PC-3 (cell line): ENCODE measurements at regions of chr12 and their contacts with region 1.

Region 1: DNA sequence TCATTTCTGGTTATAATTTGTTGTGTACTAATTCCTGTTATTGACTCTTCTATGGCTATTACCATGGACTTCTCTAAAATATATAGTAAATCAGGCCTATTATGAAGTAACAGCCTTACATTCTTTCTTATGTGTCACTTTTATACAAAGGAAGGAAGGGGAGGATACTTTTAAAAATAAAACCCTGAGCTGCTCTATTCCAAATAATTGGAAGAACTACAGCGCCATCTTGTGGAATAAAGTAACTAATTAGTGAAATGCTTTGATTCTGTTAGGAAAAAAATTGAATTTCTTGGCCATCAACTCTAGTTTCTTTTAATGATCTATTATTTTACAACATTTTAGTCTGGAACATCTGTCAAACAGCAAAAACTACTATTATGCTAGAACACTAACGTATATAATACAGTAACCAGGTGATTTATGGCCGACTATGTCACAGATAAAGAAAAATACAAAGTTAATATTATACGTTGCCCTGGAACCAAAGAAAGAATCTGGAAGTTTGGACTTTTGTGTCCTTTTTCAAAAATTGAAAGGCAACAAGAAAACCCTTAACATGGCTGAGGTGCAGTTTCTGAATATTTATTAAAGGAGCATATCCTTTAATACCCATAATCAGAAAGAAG is 55.0 kb upstream of the NELL2 start:
- DNase-seq: peak; percentile 86
- ATAC-seq: peak; percentile 76
- H3K4me3 ChIP-seq: no peak overlapping the region
- H3K27ac ChIP-seq: no peak overlapping the region
- H3K4me1 ChIP-seq: no peaks in the 10 kb centered on the region
- H3K27me3 ChIP-seq: peaks cover 9% of the 10 kb centered on the region; the same call in 1 of the 2 replicates
- CTCF ChIP-seq: peak; percentile 80

Region 2: GRCh38 chr12:43501703-43502102 is 1429.4 kb before region 1 on chr12:
- CTCF ChIA-PET with region 1: no interaction called
- POLR2A ChIA-PET with region 1: no interaction called
- intact Hi-C with region 1: loop called (anchors 5 kb)
- DNase-seq: peak; percentile 47
- ATAC-seq: no peak
- H3K4me3 ChIP-seq: no peak overlapping the region
- H3K27ac ChIP-seq: no peak overlapping the region
- H3K4me1 ChIP-seq: no peaks in the 10 kb centered on the region
- H3K27me3 ChIP-seq: no peaks in the 10 kb centered on the region; the same call in 1 of the 2 replicates
- CTCF ChIP-seq: peak; percentile 85

Region 3: GRCh38 chr12:43957732-43958372 is 973.2 kb before region 1 on chr12:
- CTCF ChIA-PET with region 1: no interaction called
- POLR2A ChIA-PET with region 1: no interaction called
- intact Hi-C with region 1: loop called (anchors 1 kb)
- DNase-seq: peak; percentile 79
- ATAC-seq: peak; percentile 87
- H3K4me3 ChIP-seq: no peak overlapping the region
- H3K27ac ChIP-seq: no peak overlapping the region
- H3K4me1 ChIP-seq: no peaks in the 10 kb centered on the region
- H3K27me3 ChIP-seq: no peaks in the 10 kb centered on the region
- CTCF ChIP-seq: peak; percentile 83

Region 4: DNA sequence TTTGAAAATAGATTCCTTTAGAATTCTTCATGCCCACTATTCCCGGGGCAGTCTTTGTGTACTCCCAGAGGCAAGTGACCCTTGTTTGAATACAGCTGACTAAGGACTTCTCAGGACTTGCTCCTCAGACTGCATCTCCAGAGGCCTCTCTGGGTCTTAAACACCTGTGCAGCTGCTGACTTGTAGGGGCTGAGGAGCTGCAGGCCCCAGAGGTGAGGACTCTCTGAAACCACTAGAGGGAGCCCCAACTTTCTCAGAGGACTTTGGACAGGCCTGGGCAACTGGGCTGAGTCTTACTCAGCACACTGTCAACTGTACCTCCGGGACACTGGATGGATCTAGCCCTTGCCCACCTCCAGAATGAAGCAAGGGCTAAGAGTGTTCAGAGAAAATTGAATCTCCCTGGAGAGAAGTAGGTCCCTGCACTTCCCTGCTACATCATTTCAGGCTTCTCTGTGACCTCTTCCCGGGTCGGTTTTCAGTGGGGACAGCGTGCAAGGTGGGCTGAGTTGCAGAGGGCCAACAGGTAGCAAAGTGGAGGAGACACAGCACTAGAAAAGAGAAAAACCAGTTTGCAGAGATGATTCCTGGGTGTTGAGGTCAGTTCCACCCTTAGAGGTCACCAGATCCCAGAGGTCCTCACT is 930.7 kb before region 1 on chr12:
- CTCF ChIA-PET with region 1: no interaction called
- POLR2A ChIA-PET with region 1: no interaction called
- intact Hi-C with region 1: loop called (anchors 5 kb)
- DNase-seq: peak; percentile 80
- ATAC-seq: peak; percentile 98
- H3K4me3 ChIP-seq: no peak overlapping the region
- H3K27ac ChIP-seq: no peak overlapping the region
- H3K4me1 ChIP-seq: no peaks in the 10 kb centered on the region
- H3K27me3 ChIP-seq: no peaks in the 10 kb centered on the region
- CTCF ChIP-seq: peak; percentile 82

Region 5: DNA sequence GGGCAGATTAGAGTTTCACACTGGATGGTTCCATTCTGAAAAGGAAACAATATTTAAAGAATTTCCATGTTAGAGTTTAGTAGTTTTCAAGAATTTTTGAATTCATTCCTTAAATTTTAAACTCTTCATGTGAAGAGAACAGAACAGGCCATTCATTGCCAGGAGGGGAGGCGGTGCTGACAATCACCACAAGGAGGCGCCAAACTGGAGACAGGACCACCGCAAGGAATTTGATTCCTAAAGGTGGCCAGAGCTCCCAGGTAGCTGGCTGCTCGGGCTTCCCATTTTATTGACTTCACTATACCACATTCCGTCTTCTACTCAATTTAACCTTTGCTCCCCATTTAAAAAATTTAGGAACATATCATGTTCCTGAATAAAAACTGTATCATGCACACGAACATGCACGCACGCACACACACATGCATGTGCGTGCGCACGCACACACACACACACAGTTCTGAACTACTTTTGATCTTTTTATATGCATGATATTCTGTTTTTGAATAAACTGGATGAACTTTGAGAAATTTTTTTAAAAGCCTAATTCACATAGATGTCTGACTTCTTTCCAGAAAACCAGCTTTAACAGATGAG is 156.2 kb before region 1 on chr12:
- CTCF ChIA-PET with region 1: no interaction called
- POLR2A ChIA-PET with region 1: no interaction called
- intact Hi-C with region 1: loop called (anchors 10 kb)
- DNase-seq: peak; percentile 54
- ATAC-seq: no peak
- H3K4me3 ChIP-seq: no peak overlapping the region
- H3K27ac ChIP-seq: no peak overlapping the region
- H3K4me1 ChIP-seq: no peaks in the 10 kb centered on the region
- H3K27me3 ChIP-seq: peaks cover 53% of the 10 kb centered on the region
- CTCF ChIP-seq: peak; percentile 89